ENCODE measurements at regions of chr5 and their contacts with region 1.

Region 1: DNA sequence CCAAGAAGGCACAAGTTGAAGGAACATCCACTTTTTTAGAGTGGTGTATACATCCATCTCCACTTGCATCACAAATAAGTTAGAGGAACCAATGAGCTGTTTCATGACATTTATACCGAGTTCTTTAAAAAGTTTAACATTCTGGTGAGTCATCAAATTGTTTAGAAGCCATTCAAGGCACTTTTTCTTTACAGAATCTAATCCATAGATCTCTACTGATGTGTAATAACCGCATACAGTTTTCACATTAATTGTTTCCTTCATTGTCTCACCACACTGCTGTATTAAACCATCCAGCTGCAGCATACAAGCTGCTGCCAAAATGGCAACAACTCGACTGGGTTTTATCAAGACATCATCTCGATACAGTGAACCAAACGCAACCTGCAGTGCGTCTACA is 744 bp downstream of the GMCL2 start:
- DNase-seq: no peak
- H3K4me3 ChIP-seq: no peak overlapping the region
- H3K27ac ChIP-seq: no peak overlapping the region
- H3K4me1 ChIP-seq: no peaks in the 10 kb centered on the region
- H3K27me3 ChIP-seq: peaks cover 2% of the 10 kb centered on the region
- CTCF ChIP-seq: no peak

Region 2: DNA sequence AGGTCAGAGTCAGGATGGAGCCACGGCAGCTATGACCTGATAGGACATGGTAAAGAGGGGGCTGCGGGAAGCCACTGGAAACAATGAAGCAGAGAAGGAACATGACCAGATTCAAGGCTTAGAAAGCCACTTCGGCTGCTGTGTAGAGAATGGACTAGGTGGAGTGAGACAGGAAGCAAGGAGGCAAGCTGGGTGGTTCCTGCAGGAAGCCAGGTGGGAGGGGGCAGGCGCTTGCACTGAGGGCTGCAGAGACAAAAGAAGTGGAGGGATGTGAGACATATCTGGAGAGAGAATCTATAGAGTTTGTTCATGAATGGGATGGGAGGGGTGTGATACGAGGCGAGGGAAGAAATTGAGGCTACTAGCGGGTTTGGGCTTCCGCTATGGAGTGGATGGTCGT is 92.1 kb before region 1 on chr5:
- CTCF ChIA-PET with region 1: no interaction called
- dilution Hi-C with region 1: no loop called
- in situ Hi-C with region 1: no loop called
- intact Hi-C with region 1: no loop called
- DNase-seq: no peak
- H3K4me3 ChIP-seq: no peak overlapping the region
- H3K27ac ChIP-seq: no peak overlapping the region
- H3K4me1 ChIP-seq: peaks cover 5% of the 10 kb centered on the region
- H3K27me3 ChIP-seq: no peaks in the 10 kb centered on the region
- CTCF ChIP-seq: no peak

Region 3: GRCh38 chr5:178146020-178146820 is 40.2 kb before region 1 on chr5:
- CTCF ChIA-PET with region 1: no interaction called
- dilution Hi-C with region 1: loop called (anchors 5 kb)
- in situ Hi-C with region 1: no loop called
- intact Hi-C with region 1: no loop called
- DNase-seq: peak; percentile 81
- H3K4me3 ChIP-seq: no peak overlapping the region
- H3K27ac ChIP-seq: no peak overlapping the region
- H3K4me1 ChIP-seq: peaks cover 12% of the 10 kb centered on the region
- H3K27me3 ChIP-seq: no peaks in the 10 kb centered on the region
- CTCF ChIP-seq: peak; percentile 84 to 94

Region 4: GRCh38 chr5:178249191-178249989 is 63.0 kb after region 1 on chr5:
- CTCF ChIA-PET with region 1: no interaction called
- dilution Hi-C with region 1: no loop called
- in situ Hi-C with region 1: no loop called
- intact Hi-C with region 1: no loop called
- DNase-seq: peak; percentile 76
- H3K4me3 ChIP-seq: no peak overlapping the region
- H3K27ac ChIP-seq: no peak overlapping the region
- H3K4me1 ChIP-seq: peaks cover 3% of the 10 kb centered on the region
- H3K27me3 ChIP-seq: no peaks in the 10 kb centered on the region
- CTCF ChIP-seq: no peak